Sciatic nerve (tissue), 2 donors: ENCODE measurements at regions of chr18 and their contacts with region 1.

Region 1: DNA sequence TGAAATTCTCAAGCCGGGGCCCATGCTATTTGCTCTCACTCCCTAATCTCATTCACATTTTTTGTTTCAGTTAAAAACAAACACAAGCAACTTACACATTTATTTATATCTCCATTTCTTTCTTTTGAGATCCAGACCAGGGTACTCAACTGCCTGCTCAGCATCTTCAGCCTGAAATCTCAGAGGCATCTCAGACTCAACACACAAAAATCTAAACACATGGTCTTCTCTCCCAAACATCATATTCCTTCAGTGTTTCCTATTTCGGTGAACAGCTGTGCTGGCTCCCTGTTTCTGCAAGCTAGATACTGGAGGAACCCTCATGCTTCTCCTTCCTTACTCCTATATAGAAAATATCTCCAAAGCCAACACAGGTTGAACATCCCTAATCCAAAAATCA is 11.3 kb upstream of the RTTN start:
- DNase-seq: no peak
- ATAC-seq: no peak

Region 2: DNA sequence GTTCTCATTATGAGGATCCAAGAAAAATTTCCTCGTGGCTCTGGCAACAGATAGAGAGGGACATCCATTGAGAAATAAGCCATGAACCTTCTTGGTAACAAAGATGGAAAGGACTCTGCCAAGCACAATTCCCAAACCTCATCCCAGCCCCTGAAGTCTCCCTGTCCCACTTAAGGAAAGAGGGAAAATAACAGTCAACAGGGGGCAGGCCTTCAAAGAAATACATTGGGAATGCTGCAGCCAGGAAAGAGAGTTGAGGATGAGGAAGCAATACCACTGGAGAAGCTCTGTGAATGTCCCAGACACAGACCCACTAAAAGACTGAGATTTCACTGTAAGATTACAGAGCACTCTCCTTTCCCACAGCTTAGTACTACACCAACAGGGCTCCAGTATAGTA is 362.3 kb before region 1 on chr18:
- intact Hi-C with region 1: loop called (anchors 5 kb)
- DNase-seq: no peak
- ATAC-seq: no peak